Activated T-helper 2 cell treated with anti-CD3 and anti-CD28 coated beads, Interferon-gamma antibody, Interleukin-2, Interleukin-4, amounts not matched to agents 10 μg/mL and 5 μg/mL and 100 μg/mL, durations not matched to agents 14 hours and 24 hours and 36 hours (primary cell): ENCODE measurements at regions of chr9 and their contacts with region 1.

Region 1: GRCh38 chr9:122402403-122402871 is 31.6 kb downstream of the PTGS1 start:
- DNase-seq: peak; percentile 32
- H3K4me3 Mint-ChIP-seq: no peak overlapping the region
- H3K27ac Mint-ChIP-seq: peak overlapping the region; percentile 83
- H3K4me1 Mint-ChIP-seq: peaks cover 23% of the 10 kb centered on the region
- H3K27me3 Mint-ChIP-seq: no peaks in the 10 kb centered on the region

Region 2: DNA sequence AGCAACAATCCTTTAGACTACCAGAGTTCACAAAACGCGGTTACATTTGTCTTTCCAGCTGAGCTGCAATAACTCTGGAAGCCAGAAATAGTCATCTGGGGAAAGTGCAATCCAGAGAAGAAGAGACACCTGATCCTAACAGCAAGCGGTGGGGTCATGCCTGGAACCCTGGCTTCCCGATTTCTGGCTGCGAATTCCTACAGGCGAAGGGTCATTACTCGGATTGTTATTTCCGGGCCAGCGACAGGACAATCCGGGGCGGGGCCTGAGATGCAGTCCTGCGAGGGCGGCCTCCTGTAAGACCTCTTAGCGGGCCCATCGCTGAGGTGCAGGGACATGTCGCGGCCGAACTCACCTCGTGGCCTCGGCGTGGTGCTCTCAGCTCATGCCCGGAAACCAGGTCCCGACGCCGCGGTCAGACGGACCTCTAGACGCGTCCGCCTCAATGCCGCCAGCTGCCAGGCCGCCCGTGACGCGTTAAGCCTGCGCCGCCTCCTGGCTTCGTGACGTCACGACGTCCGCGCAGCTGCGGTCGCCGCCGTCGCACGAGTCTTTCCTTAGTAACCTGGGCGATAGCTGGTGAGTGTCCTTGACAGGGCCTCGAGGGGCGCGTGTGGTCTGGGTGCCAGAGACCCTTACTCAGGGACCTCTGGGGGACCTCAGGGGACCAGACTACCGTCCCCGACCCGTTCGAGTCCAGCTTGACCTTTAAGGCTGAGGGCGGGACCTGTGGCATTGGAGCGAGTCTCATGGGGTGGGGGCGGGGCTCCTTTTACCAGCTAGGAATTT is 137.9 kb before region 1 on chr9 and contains the starts of genes MRRF and RBM18:
- intact Hi-C with region 1: no loop called
- DNase-seq: peak; percentile 89
- H3K4me3 Mint-ChIP-seq: peak within 1 kb of the TSS; percentile 97
- H3K27ac Mint-ChIP-seq: peak within 1 kb of the TSS; percentile 99
- H3K4me1 Mint-ChIP-seq: peaks cover 36% of the 10 kb centered on the region
- H3K27me3 Mint-ChIP-seq: no peaks in the 10 kb centered on the region
- total RNA-seq, gene MRRF: 57.0 and 58.8 TPM in 2 replicates
- total RNA-seq, gene RBM18: 19.4 and 21.9 TPM in 2 replicates

Region 3: GRCh38 chr9:122383992-122384461 is 18.4 kb before region 1 on chr9:
- intact Hi-C with region 1: loop called (anchors 2 kb)
- DNase-seq: no peak
- H3K4me3 Mint-ChIP-seq: no peak overlapping the region
- H3K27ac Mint-ChIP-seq: peak overlapping the region; percentile 7
- H3K4me1 Mint-ChIP-seq: peaks cover 11% of the 10 kb centered on the region
- H3K27me3 Mint-ChIP-seq: no peaks in the 10 kb centered on the region